SK-N-SH (cell line): ENCODE measurements at regions of chr1 and their contacts with region 1.

Region 1: GRCh38 chr1:117512743-117513321 is 93.0 kb upstream of the TENT5C start:
- DNase-seq: no peak
- H3K4me3 ChIP-seq: no peak overlapping the region; a peak in 1 of 4 replicates
- H3K27ac ChIP-seq: no peak overlapping the region
- H3K4me1 ChIP-seq: no peaks in the 10 kb centered on the region
- H3K27me3 ChIP-seq: no peaks in the 10 kb centered on the region
- CTCF ChIP-seq: peak; percentile 82
- EP300 ChIP-seq: no peak
- RAD21 ChIP-seq: peak; percentile 82

Region 2: DNA sequence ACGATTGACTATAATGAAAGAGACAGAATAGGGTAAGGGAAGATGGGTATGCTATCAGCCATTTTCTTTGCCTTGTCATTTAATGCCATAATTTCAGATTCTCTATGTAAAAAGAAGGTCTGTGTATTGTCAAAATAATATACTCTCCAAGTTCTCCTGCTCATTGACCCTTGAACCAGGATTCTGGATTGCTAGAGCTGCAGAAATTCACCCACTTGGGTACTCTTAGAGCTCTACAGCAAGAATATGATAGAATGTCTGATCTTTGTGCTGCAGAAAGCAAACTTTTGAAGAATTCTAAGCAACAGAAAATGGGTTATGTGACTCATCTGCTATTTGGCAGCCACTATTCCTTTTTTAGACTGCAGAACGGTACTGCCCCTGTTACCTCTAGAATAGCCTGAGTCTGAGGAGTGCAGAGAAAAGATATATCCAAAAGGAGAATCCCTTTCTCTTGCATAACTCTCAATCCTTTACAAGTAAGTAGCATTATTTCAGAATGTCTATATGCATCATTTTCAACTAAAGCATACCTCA is 14.8 kb after region 1 on chr1:
- CTCF ChIA-PET with region 1: interaction called, 50 read pairs
- POLR2A ChIA-PET with region 1: no interaction called
- DNase-seq: no peak
- H3K4me3 ChIP-seq: no peak overlapping the region
- H3K27ac ChIP-seq: peak overlapping the region in 1 of 2 experiments; percentile 19; a peak in 1 of 4 replicates
- H3K4me1 ChIP-seq: no peaks in the 10 kb centered on the region
- H3K27me3 ChIP-seq: no peaks in the 10 kb centered on the region
- CTCF ChIP-seq: no peak
- EP300 ChIP-seq: no peak
- RAD21 ChIP-seq: no peak

Region 3: DNA sequence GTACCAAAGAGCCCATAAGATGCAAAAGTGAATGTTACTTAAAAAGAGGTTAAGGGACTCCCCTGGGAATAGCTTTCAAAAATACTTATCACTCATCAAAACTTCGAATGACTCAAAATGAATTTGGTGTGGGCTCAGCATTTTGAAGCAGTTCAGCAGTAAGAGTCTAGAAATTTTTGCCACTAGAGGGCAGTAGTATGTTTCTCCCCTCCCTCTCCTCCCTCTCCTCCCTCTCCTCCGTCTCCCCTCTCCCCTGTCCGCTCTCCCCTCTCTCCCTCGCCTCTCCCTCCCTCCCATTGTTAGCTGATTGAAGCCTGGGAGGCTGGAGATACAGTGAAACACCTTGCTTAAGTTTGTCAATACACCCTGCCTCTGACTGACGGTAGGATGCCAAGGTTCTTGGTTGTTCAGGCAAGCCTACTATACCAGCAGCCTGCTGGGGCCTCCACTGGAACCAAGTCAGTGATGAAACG is 22.2 kb after region 1 on chr1:
- CTCF ChIA-PET with region 1: interaction called, 50 read pairs
- POLR2A ChIA-PET with region 1: no interaction called
- DNase-seq: peak; percentile 56
- H3K4me3 ChIP-seq: no peak overlapping the region; a peak in 1 of 4 replicates
- H3K27ac ChIP-seq: no peak overlapping the region
- H3K4me1 ChIP-seq: no peaks in the 10 kb centered on the region
- H3K27me3 ChIP-seq: no peaks in the 10 kb centered on the region
- CTCF ChIP-seq: peak; percentile 68
- EP300 ChIP-seq: no peak
- RAD21 ChIP-seq: peak; percentile 69

Region 4: DNA sequence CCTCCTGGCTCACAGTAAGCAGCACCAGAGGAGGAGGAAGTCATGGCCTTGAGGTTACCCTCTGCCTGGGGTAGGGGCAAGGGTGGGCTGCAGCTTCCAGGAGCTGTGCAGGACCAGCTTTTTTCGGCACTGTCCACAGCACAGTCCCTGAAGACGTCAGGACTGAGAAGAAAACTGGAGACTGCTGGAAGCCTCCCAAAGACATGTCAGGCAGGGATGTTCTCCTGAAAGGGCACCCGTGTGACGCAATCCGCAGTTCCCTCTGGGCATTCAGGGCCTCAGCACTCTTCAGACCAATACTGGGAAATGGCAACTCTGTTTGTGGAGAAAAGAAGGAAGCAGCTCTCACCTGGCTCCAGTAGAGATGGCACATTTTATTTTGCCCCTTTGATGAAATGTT is 28.2 kb after region 1 on chr1:
- CTCF ChIA-PET with region 1: interaction called, 50 read pairs
- POLR2A ChIA-PET with region 1: no interaction called
- DNase-seq: no peak
- H3K4me3 ChIP-seq: no peak overlapping the region
- H3K27ac ChIP-seq: no peak overlapping the region
- H3K4me1 ChIP-seq: peaks cover 0 to 6% of the 10 kb centered on the region in 2 experiments; a peak in 1 of 4 replicates
- H3K27me3 ChIP-seq: no peaks in the 10 kb centered on the region
- CTCF ChIP-seq: no peak
- EP300 ChIP-seq: no peak
- RAD21 ChIP-seq: no peak